Common myeloid progenitor, CD34-positive (primary cell): ENCODE measurements at regions of chr3 and their contacts with region 1.

Region 1: GRCh38 chr3:123028233-123028828 is 768 bp upstream of the SEMA5B start:
- DNase-seq: peak; percentile 56 to 68 (median 64)
- H3K4me3 ChIP-seq: peak overlapping the region in 6 of 7 experiments; percentile 50 to 71 (median 64)
- H3K27ac ChIP-seq: no peak overlapping the region
- H3K4me1 ChIP-seq: peaks cover 6 to 30% (median 26%) of the 10 kb centered on the region in 4 experiments
- H3K27me3 ChIP-seq: peaks cover 2 to 76% (median 56%) of the 10 kb centered on the region in 5 experiments

Region 2: DNA sequence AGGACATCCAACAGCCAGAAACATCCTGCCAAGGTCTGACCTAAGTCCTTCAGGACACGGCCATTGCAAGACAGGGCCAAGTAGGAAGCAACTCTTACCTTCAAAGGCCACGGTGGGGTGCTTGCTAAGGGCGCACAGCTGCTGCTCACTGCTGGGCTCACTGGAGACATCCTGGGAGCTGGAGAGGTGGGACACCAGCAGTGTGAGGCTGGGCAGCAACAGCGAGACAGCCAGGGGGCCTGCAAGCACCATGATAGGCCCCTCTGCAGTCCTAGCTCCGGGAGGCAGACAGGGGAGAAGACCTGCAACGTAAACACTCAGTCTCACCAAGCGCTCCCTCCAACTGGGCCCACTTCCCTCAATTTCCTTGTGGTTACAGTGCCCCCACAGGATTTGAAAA is 79.9 kb before region 1 on chr3:
- CTCF ChIA-PET with region 1: interaction called, 66 read pairs
- POLR2A ChIA-PET with region 1: no interaction called
- DNase-seq: peak; percentile 32 to 51 (median 46)
- H3K4me3 ChIP-seq: no peak overlapping the region
- H3K27ac ChIP-seq: no peak overlapping the region
- H3K4me1 ChIP-seq: peaks cover 0 to 9% (median 4%) of the 10 kb centered on the region in 4 experiments
- H3K27me3 ChIP-seq: no peaks in the 10 kb centered on the region

Region 3: GRCh38 chr3:123015557-123015956 is 12.8 kb before region 1 on chr3:
- CTCF ChIA-PET with region 1: interaction called, 60 read pairs
- POLR2A ChIA-PET with region 1: interaction called, 3 read pairs
- DNase-seq: no peak
- H3K4me3 ChIP-seq: no peak overlapping the region
- H3K27ac ChIP-seq: no peak overlapping the region
- H3K4me1 ChIP-seq: peaks cover 0 to 6% (median 0%) of the 10 kb centered on the region in 4 experiments
- H3K27me3 ChIP-seq: peaks cover 0 to 13% (median 3%) of the 10 kb centered on the region in 5 experiments